HCT116 (cell line): ENCODE measurements at regions of chr2 and their contacts with region 1.

Region 1: DNA sequence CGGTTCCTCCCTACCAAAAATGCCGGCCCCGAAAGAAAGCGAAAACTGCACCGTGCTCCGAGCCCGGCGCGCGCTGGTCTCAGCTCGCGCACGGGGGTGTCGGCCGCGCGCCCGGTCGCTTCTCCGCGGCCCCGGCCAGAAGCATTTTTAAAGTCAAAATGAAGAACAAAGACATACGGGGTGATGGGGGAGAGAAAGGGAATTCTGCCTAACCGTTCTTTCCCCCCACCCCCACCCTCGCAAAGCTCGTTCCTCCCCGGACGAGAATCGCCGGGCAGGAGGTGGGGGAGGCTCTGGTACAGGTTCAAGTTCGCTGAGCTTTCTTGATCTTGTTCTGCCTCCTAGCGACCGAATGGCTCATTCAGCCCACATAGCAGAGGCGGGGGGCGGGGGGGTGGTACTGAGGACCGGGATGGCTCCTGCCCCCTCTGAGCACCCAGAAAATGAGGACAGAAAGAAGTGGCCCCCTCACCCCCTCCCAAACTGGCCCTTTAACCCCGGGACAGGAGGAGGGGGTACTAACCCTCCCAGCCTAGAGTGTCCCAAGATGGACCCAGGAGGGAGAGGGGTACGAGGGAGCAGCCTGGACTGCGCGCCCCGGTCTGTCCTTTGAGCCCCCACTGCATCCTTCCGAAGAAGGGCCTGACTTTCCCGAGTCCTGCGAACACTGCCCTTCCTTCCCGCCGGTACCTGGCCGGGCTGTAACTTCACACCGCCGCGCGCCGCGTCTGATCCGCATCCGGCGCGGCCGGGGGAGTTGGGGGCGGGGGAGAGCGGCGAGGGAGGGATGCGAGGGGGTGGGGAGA is 3.1 kb downstream of the BCL11A start:
- DNase-seq: peak; percentile 50
- ATAC-seq: peak; percentile 64
- H3K4me3 ChIP-seq: peak overlapping the region; percentile 48 to 64
- H3K27ac ChIP-seq: no peak overlapping the region
- H3K4me1 ChIP-seq: peaks cover 2 to 32% of the 10 kb centered on the region in 2 experiments; a peak in 3 of 4 replicates
- H3K27me3 ChIP-seq: peaks cover 64% of the 10 kb centered on the region
- CTCF ChIP-seq: peak; percentile 45 to 77 (median 57); a peak in 5 of 6 replicates
- POLR2A ChIP-seq: no peak
- RAD21 ChIP-seq: peak; percentile 89

Region 2: DNA sequence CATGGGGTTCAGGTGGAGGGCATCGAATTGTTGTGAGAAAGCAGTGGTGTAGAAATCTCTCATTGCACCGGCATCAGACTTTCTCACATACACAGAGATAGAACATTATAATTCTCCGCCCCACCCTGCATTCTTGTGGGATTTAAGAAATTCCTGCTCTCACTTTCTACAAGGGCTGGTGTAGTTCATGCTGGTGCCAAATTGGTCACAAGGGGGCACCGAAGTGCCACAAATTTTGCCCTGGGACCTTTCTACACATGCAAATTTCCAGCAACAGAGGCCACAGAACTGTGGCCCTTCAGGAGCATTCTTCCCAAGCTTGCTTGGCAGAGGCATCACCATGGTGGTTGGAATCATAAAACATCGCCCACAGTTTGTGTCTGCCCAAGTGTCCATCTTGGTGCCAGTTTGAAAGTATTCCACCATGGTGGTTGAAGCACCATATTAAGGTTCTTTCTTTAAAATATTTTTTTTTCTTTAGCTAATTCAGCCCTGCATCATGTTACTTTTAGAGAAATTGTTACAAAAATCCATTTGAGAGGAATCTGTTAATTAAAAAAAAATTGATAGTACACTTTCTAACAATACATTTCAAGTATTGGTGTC is 1788.1 kb before region 1 on chr2:
- CTCF ChIA-PET with region 1: interaction called, 5 read pairs
- POLR2A ChIA-PET with region 1: no interaction called
- RAD21 ChIA-PET with region 1: interaction called, 3 to 4 read pairs
- intact Hi-C with region 1: loop called (anchors 5 kb)
- DNase-seq: peak; percentile 41
- ATAC-seq: peak; percentile 97
- H3K4me3 ChIP-seq: no peak overlapping the region
- H3K27ac ChIP-seq: no peak overlapping the region
- H3K4me1 ChIP-seq: no peaks in the 10 kb centered on the region
- H3K27me3 ChIP-seq: peaks cover 32% of the 10 kb centered on the region
- CTCF ChIP-seq: peak; percentile 44 to 78 (median 74); a peak in 5 of 6 replicates
- POLR2A ChIP-seq: no peak
- RAD21 ChIP-seq: peak; percentile 75

Region 3: DNA sequence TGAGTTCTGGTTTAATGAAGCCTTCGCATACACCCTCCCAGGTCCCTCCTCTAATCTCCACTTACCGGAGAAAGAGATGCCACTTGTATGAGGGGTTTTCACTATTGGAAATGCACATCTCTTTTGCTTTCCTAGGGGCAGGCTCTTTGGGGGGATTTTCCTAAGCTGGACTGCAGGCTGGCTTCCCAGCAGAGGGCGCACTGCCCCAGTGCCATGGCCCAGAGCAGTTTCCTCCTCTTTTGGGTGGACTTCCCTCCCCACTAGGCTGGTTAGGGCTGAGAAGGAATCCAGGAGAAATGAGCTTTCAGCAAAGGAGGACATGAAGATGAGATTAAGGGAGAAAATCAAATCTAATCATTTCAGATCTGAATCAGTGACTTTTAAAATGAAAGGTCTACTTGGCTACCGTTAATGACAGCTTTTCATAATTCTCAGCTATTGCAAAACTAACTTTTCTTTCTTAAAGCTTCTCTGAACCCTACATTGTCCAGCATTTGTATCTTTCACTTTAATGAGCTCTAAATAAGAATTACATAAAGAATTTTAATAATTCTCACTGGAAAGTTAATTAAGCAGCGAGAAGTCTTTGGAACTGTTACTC is 1525.1 kb before region 1 on chr2:
- CTCF ChIA-PET with region 1: interaction called, 23 read pairs
- POLR2A ChIA-PET with region 1: no interaction called
- RAD21 ChIA-PET with region 1: interaction called, 3 to 4 read pairs
- intact Hi-C with region 1: loop called (anchors 1 kb)
- DNase-seq: peak; percentile 8
- ATAC-seq: peak; percentile 89
- H3K4me3 ChIP-seq: no peak overlapping the region
- H3K27ac ChIP-seq: no peak overlapping the region
- H3K4me1 ChIP-seq: no peaks in the 10 kb centered on the region
- H3K27me3 ChIP-seq: peaks cover 9% of the 10 kb centered on the region; the same call in 1 of the 2 replicates
- CTCF ChIP-seq: peak; percentile 50 to 96 (median 94); a peak in 5 of 6 replicates
- POLR2A ChIP-seq: no peak
- RAD21 ChIP-seq: peak; percentile 52

Region 4: DNA sequence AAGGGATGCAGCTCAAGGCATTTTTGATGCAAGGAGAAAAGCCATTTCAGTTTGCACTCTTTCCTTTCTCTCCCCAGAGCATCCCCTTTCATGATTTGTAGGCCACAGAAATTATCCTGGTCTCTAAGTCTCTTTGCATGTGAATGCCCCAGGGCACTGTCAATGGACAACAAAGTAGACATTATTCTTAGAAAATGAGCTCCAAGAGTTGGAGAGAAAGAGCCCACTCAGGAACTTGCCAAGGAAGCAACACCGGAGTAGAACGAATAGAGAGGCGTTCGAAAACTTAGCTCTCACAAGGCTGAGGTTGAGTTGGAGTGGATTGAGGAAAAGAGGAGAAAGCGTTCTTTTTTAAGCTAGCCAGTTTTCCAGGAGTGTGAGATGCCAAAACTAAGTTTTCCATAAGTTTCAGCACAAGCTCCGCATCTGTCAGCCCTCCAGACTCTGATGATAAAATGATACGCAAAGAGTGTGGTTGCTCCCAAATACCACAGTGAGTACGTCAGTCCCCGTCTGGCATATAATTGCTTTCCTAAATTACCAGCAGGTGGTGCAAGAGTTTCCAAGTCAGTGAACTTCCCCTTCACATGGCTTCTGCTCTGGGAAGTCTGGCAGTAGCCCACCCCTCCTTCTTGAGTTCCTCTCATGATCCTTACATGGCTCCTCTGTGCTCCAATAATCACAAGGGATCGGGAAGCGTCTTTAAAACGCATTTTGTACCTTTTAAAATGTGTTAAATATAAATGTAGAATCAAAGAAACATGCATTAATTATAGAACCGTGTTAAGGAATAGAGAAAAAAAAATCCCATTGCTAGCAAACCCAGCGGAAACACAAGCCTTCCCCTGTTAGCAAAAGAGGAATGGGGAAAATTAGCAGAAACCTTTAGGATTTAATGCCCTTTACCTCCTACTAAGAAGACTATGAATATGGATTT is 1248.6 kb before region 1 on chr2:
- CTCF ChIA-PET with region 1: interaction called, 4 read pairs
- POLR2A ChIA-PET with region 1: no interaction called
- RAD21 ChIA-PET with region 1: no interaction called
- intact Hi-C with region 1: loop called (anchors 10 kb)
- DNase-seq: peak; percentile 15
- ATAC-seq: peak; percentile 60
- H3K4me3 ChIP-seq: no peak overlapping the region
- H3K27ac ChIP-seq: no peak overlapping the region
- H3K4me1 ChIP-seq: no peaks in the 10 kb centered on the region
- H3K27me3 ChIP-seq: no peaks in the 10 kb centered on the region
- CTCF ChIP-seq: peak in 2 of 3 experiments; percentile 30 to 40; a peak in 3 of 6 replicates
- POLR2A ChIP-seq: no peak
- RAD21 ChIP-seq: peak; percentile 26; the same call in 1 of the 2 replicates

Region 5: DNA sequence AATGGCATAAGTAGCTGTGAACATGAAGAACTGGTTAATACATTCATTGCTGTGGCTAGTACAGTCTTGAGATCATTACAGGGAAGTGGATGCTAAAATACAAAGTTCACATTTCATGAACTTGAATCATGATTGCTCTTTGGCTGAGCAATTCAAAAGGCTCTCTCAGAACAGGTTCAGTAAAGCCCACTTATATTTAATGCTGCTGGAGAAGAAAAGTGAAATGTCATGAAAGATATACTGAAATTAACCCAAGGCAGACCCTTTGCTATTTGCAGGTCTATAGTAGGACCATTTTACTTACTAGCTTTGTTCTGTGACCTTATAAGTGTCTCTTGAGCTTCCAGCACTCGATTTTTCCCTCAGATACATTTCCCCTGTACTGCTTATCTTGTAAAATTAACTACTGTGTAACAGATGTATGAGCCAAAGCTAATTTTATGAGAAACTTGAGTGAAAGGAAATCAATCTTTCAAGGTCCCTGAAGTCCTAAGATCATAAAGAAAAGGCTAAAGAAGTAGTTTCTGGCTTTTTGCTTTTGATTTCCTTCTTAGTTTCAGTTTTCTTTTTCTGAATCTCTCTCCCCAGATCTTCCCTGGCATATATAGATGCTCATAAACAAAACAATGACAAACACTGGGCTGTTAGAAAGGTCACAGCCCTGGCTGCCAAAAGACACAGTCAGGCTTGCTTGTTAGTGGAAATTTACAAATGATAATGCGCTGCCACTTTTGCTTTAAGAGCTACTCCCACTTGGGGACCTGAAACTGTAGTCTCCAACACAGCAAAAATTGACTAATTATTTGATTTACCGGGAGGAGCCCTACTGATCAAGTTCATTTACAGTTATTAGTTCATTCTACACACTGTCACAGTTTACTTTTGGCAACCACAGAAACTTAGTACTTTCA is 1120.5 kb after region 1 on chr2:
- CTCF ChIA-PET with region 1: no interaction called
- POLR2A ChIA-PET with region 1: no interaction called
- RAD21 ChIA-PET with region 1: no interaction called
- intact Hi-C with region 1: no loop called
- DNase-seq: no peak
- ATAC-seq: peak; percentile 27; the same call in 1 of the 2 replicates
- H3K4me3 ChIP-seq: no peak overlapping the region
- H3K27ac ChIP-seq: peak overlapping the region; percentile 1; the same call in 1 of the 2 replicates
- H3K4me1 ChIP-seq: peaks cover 12 to 17% of the 10 kb centered on the region in 2 experiments; a peak in 3 of 4 replicates
- H3K27me3 ChIP-seq: no peaks in the 10 kb centered on the region
- CTCF ChIP-seq: no peak
- POLR2A ChIP-seq: no peak
- RAD21 ChIP-seq: no peak